Naive thymus-derived CD4-positive, alpha-beta T cell (primary cell): ENCODE measurements at regions of chr11 and their contacts with region 1.

Region 1: DNA sequence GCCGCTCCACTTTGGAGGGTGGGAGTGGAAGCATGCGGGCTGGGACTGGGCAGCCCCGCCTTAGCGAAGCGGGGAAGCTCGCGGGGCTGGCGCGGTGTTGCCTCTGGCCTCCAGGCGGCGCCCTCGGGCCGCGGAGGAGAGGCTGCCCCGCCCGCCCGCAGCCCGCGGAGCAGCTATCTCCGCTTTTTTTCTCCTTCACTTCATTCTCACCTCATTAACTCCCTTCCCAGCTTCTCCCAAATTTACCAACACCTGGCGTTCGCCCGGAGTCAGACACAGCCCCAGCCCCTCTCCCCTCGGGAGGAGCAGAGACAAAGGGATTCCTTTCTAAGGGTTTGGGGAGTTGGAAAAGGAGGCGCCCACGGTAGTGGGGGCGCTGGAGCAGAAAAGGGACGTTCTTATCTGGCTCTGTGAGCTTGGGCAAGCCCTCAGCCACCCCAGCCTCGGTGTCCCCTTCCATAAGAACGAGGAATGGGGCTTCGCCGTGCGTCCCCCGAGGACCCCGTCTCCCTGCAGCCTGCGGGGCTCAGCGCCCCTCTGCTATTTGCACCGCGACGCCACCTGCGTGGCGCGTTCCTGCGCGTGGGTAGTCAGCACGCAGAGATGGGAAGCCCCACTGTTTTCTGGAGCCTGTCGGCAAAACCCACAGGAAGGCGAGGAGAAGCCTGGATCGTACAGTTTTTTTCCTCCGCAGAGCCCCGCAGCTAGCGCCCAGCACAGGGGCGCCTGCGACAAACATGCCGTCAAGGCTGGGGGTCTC is 1.5 kb upstream of the WNT11 start:
- DNase-seq: peak; percentile 55 to 86 (median 80)
- ATAC-seq: peak; percentile 89
- H3K4me3 ChIP-seq: peak overlapping the region; percentile 71
- H3K4me3 Mint-ChIP-seq: peak overlapping the region; percentile 78 to 93 (median 84)
- H3K27ac ChIP-seq: no peak overlapping the region
- H3K27ac Mint-ChIP-seq: peak overlapping the region in 2 of 9 donors; percentile 18 to 32
- H3K4me1 ChIP-seq: peaks cover 10 to 17% of the 10 kb centered on the region in 2 donors
- H3K4me1 Mint-ChIP-seq: peaks cover 6 to 28% (median 18%) of the 10 kb centered on the region in 7 donors
- H3K27me3 ChIP-seq: peaks cover 0 to 12% of the 10 kb centered on the region in 2 donors
- H3K27me3 Mint-ChIP-seq: peaks cover 32 to 67% (median 45%) of the 10 kb centered on the region in 5 donors

Region 2: DNA sequence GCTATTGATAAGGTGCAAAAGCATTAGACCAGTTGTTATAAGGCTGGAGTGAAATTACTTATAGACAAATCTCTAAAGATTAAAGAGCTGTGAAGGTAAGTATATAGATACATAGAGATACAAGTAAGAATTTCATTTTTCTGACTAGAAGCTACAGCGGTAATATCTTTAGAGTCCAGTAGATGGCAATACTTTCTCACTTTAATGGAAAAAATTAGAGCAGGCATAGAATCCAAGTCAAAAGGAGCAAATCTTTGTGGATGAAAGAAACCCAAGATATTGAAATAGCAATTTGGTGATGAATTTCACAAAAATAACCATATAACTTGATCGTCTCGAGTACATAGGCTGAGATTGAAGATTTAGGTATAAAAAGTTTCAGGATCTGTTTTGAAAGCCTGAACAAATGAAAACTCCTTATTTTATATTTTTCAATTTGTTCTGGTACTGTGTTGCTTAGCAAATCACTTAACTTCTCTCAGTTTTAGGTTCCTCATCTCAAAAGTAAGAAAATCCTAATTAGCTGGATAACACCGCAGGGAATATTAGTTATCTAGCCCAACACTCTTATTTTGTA is 310.9 kb before region 1 on chr11:
- CTCF ChIA-PET with region 1: interaction called, 7 read pairs
- POLR2A ChIA-PET with region 1: no interaction called
- intact Hi-C with region 1: loop called (anchors 1 to 5 kb)
- DNase-seq: peak in 5 of 9 donors; percentile 25 to 36 (median 32)
- ATAC-seq: no peak
- H3K4me3 ChIP-seq: no peak overlapping the region
- H3K4me3 Mint-ChIP-seq: no peak overlapping the region
- H3K27ac ChIP-seq: no peak overlapping the region
- H3K27ac Mint-ChIP-seq: no peak overlapping the region
- H3K4me1 ChIP-seq: no peaks in the 10 kb centered on the region
- H3K4me1 Mint-ChIP-seq: peaks cover 3 to 17% (median 4%) of the 10 kb centered on the region in 7 donors
- H3K27me3 ChIP-seq: no peaks in the 10 kb centered on the region
- H3K27me3 Mint-ChIP-seq: no peaks in the 10 kb centered on the region

Region 3: GRCh38 chr11:76169473-76169903 is 38.3 kb before region 1 on chr11:
- CTCF ChIA-PET with region 1: no interaction called
- POLR2A ChIA-PET with region 1: no interaction called
- intact Hi-C with region 1: no loop called
- DNase-seq: no peak
- ATAC-seq: no peak
- H3K4me3 ChIP-seq: no peak overlapping the region
- H3K4me3 Mint-ChIP-seq: no peak overlapping the region
- H3K27ac ChIP-seq: no peak overlapping the region
- H3K27ac Mint-ChIP-seq: no peak overlapping the region
- H3K4me1 ChIP-seq: no peaks in the 10 kb centered on the region
- H3K4me1 Mint-ChIP-seq: peaks cover 0 to 1% (median 0%) of the 10 kb centered on the region in 7 donors
- H3K27me3 ChIP-seq: no peaks in the 10 kb centered on the region
- H3K27me3 Mint-ChIP-seq: peaks cover 0 to 1% (median 0%) of the 10 kb centered on the region in 5 donors

Region 4: DNA sequence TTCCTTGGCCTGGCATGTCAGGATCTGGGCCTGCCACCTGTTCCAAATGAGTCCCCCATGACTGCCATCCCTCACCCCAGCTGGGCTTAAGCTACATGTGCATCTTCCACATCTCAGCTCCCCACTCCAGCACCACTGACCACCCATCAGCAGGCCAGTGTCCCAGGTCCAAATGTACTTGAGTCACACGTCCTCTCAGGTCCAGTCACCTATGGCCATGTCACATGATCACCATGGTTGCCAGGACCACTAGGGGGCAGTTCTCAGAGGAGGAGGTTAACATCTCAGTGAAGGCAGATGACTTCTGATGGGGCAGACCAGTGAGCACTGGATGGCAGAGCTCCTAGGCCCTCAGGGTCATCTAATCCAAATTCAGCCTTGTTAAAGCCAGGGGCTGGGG is 40.4 kb after region 1 on chr11:
- CTCF ChIA-PET with region 1: interaction called, 18 read pairs
- POLR2A ChIA-PET with region 1: no interaction called
- intact Hi-C with region 1: loop called in 1 of 2 experiments (anchors 5 kb)
- DNase-seq: no peak
- ATAC-seq: no peak
- H3K4me3 ChIP-seq: no peak overlapping the region
- H3K4me3 Mint-ChIP-seq: no peak overlapping the region
- H3K27ac ChIP-seq: no peak overlapping the region
- H3K27ac Mint-ChIP-seq: no peak overlapping the region
- H3K4me1 ChIP-seq: no peaks in the 10 kb centered on the region
- H3K4me1 Mint-ChIP-seq: peaks cover 0 to 8% (median 0%) of the 10 kb centered on the region in 7 donors
- H3K27me3 ChIP-seq: no peaks in the 10 kb centered on the region
- H3K27me3 Mint-ChIP-seq: peaks cover 0 to 11% (median 3%) of the 10 kb centered on the region in 5 donors

Region 5: DNA sequence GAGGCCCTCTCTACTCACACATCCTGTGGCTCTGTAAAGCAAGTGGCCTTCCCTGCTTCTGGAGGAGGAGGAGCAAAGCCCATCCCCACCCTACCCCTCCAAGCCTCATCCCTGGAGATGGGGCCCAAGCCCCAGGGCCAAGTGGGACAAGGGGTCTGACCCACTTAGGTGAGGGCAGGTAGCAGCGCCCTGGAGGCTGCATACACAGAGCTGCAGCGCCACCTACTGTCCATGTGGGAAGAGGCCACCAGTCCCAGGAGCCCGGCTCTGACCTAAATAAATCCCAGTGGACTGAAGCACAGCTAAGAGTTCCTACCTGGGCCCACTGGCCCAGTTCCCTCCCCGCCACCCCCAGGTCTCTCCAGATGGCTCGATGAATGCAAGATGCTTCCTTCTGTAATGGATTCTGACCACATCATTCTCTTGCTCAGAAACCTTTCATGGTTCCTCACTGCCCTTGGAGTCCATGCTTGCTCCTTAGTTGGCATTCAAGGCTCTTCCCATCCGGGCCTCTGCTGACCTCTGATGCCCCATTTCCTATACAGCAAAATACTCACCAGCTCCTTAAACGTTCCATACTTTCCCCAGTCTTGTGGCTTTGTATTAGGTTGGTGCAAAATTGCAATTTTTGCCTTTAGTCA is 111.0 kb after region 1 on chr11:
- CTCF ChIA-PET with region 1: interaction called, 151 read pairs
- POLR2A ChIA-PET with region 1: interaction called, 11 read pairs
- intact Hi-C with region 1: loop called (anchors 1 kb)
- DNase-seq: peak; percentile 61 to 88 (median 80)
- ATAC-seq: peak; percentile 96
- H3K4me3 ChIP-seq: no peak overlapping the region
- H3K4me3 Mint-ChIP-seq: no peak overlapping the region
- H3K27ac ChIP-seq: no peak overlapping the region
- H3K27ac Mint-ChIP-seq: no peak overlapping the region
- H3K4me1 ChIP-seq: no peaks in the 10 kb centered on the region
- H3K4me1 Mint-ChIP-seq: peaks cover 0 to 17% (median 0%) of the 10 kb centered on the region in 7 donors
- H3K27me3 ChIP-seq: no peaks in the 10 kb centered on the region
- H3K27me3 Mint-ChIP-seq: peaks cover 35 to 48% (median 44%) of the 10 kb centered on the region in 5 donors

Region 6: DNA sequence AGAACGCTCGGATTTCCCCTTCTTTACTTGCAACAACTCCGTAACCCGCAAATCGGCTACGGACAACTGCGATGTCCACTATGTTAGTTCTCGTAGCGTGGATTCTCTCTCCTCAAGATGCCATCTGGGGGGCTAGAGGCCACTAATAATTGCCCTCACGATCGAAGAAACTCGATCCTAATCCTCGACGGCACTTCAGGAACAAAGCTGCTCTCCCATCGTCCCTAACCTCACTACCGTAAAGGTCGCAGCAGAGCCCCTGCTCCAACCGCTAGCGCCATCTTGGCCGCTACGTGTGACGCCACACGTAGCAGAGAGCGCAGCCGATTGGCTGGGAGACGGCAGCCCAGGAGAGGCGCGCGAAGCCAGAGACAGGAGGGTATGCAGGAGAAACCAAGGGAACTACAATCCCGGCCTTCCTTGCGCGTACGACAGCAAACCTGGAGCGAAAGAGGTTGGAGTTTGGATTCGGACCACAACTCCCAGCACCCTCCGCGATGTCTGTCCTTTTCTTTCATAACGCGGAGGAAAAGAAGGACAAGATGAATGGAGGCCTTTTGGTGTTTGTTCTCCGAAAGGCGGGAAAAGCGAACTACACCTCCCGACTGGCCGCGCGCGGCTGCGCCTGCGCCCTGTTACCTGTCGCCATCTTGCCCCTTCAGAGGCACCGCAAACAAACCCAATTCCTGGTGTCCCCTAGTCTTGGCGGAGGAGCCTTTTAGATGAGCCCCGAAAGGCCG is 236.7 kb after region 1 on chr11 and contains the start of gene EMSY:
- CTCF ChIA-PET with region 1: no interaction called
- POLR2A ChIA-PET with region 1: no interaction called
- intact Hi-C with region 1: loop called (anchors 1 to 2 kb)
- DNase-seq: peak; percentile 73 to 95 (median 92)
- ATAC-seq: peak; percentile 96
- H3K4me3 ChIP-seq: peak within 1 kb of the TSS; percentile 95
- H3K4me3 Mint-ChIP-seq: peak within 1 kb of the TSS; percentile 91 to 99 (median 96)
- H3K27ac ChIP-seq: peak within 1 kb of the TSS; percentile 92
- H3K27ac Mint-ChIP-seq: peak within 1 kb of the TSS; percentile 91 to 98 (median 97)
- H3K4me1 ChIP-seq: peaks cover 12 to 19% of the 10 kb centered on the region in 2 donors
- H3K4me1 Mint-ChIP-seq: peaks cover 29 to 58% (median 44%) of the 10 kb centered on the region in 7 donors
- H3K27me3 ChIP-seq: no peaks in the 10 kb centered on the region
- H3K27me3 Mint-ChIP-seq: no peaks in the 10 kb centered on the region
- total RNA-seq, gene EMSY: 35.5 to 49.0 (median 40.0) TPM

Region 7: GRCh38 chr11:76680518-76681425 is 472.9 kb after region 1 on chr11:
- CTCF ChIA-PET with region 1: no interaction called
- POLR2A ChIA-PET with region 1: no interaction called
- intact Hi-C with region 1: loop called in 1 of 2 experiments (anchors 1 kb)
- DNase-seq: peak in 7 of 9 donors; percentile 21 to 65 (median 38)
- ATAC-seq: peak; percentile 70
- H3K4me3 ChIP-seq: no peak overlapping the region
- H3K4me3 Mint-ChIP-seq: no peak overlapping the region
- H3K27ac ChIP-seq: no peak overlapping the region
- H3K27ac Mint-ChIP-seq: no peak overlapping the region
- H3K4me1 ChIP-seq: peaks cover 0 to 2% of the 10 kb centered on the region in 2 donors
- H3K4me1 Mint-ChIP-seq: peaks cover 0 to 28% (median under 1%) of the 10 kb centered on the region in 7 donors
- H3K27me3 ChIP-seq: no peaks in the 10 kb centered on the region
- H3K27me3 Mint-ChIP-seq: peaks cover 3 to 35% (median 20%) of the 10 kb centered on the region in 5 donors